ENCODE measurements at regions of chr19 and their contacts with region 1.

Region 1: GRCh38 chr19:49808711-49809159 is 4.4 kb downstream of the FUZ start:
- DNase-seq: peak; percentile 94 to 99
- H3K4me3 ChIP-seq: peak overlapping the region; percentile 40 to 61 (median 52)
- H3K27ac ChIP-seq: no peak overlapping the region; the same call in 1 of the 2 replicates
- H3K4me1 ChIP-seq: peaks cover 6 to 17% (median 12%) of the 10 kb centered on the region in 4 experiments
- H3K27me3 ChIP-seq: no peaks in the 10 kb centered on the region
- CTCF ChIP-seq: no peak
- EP300 ChIP-seq: no peak
- POLR2A ChIP-seq: peak; percentile 66 to 80; a peak in 2 of 3 replicates
- RAD21 ChIP-seq: no peak

Region 2: GRCh38 chr19:49779731-49780589 is 28.8 kb before region 1 on chr19:
- CTCF ChIA-PET with region 1: interaction called, 14 read pairs
- POLR2A ChIA-PET with region 1: interaction called, 3 read pairs
- DNase-seq: no peak
- H3K4me3 ChIP-seq: no peak overlapping the region
- H3K27ac ChIP-seq: no peak overlapping the region
- H3K4me1 ChIP-seq: no peaks in the 10 kb centered on the region; a peak in 2 of 7 replicates
- H3K27me3 ChIP-seq: no peaks in the 10 kb centered on the region
- CTCF ChIP-seq: no peak
- EP300 ChIP-seq: no peak
- POLR2A ChIP-seq: no peak
- RAD21 ChIP-seq: no peak

Region 3: GRCh38 chr19:49889687-49890348 is 81.1 kb after region 1 on chr19:
- CTCF ChIA-PET with region 1: no interaction called
- POLR2A ChIA-PET with region 1: no interaction called
- DNase-seq: peak; percentile 88 to 94
- H3K4me3 ChIP-seq: peak overlapping the region; percentile 35 to 61 (median 42); a peak in 7 of 8 replicates
- H3K27ac ChIP-seq: no peak overlapping the region
- H3K4me1 ChIP-seq: peaks cover 0 to 10% (median 8%) of the 10 kb centered on the region in 4 experiments; a peak in 5 of 7 replicates
- H3K27me3 ChIP-seq: peaks cover 0 to 11% (median 6%) of the 10 kb centered on the region in 4 experiments; a peak in 4 of 7 replicates
- CTCF ChIP-seq: peak; percentile 77 to 94 (median 87)
- EP300 ChIP-seq: peak in 1 of 2 experiments; percentile 47; a peak in 1 of 3 replicates
- POLR2A ChIP-seq: no peak
- RAD21 ChIP-seq: peak; percentile 18 to 45; a peak in 3 of 4 replicates

Region 4: GRCh38 chr19:49957262-49957915 is 148.7 kb after region 1 on chr19:
- CTCF ChIA-PET with region 1: no interaction called
- POLR2A ChIA-PET with region 1: no interaction called
- DNase-seq: no peak
- H3K4me3 ChIP-seq: no peak overlapping the region
- H3K27ac ChIP-seq: no peak overlapping the region
- H3K4me1 ChIP-seq: peaks cover 0 to 17% (median 9%) of the 10 kb centered on the region in 4 experiments; a peak in 6 of 7 replicates
- H3K27me3 ChIP-seq: no peaks in the 10 kb centered on the region
- CTCF ChIP-seq: no peak
- EP300 ChIP-seq: no peak
- POLR2A ChIP-seq: no peak
- RAD21 ChIP-seq: no peak

Measured in H1 (cell line).